PC-3 (cell line): ENCODE measurements at regions of chr1 and their contacts with region 1.

Region 1: GRCh38 chr1:32992489-32993323 is 28.1 kb upstream of the RNF19B start:
- DNase-seq: peak; percentile 93
- ATAC-seq: peak; percentile 94
- H3K4me3 ChIP-seq: no peak overlapping the region
- H3K27ac ChIP-seq: peak overlapping the region; percentile 61
- H3K4me1 ChIP-seq: peaks cover 48% of the 10 kb centered on the region
- H3K27me3 ChIP-seq: no peaks in the 10 kb centered on the region
- CTCF ChIP-seq: no peak

Region 2: DNA sequence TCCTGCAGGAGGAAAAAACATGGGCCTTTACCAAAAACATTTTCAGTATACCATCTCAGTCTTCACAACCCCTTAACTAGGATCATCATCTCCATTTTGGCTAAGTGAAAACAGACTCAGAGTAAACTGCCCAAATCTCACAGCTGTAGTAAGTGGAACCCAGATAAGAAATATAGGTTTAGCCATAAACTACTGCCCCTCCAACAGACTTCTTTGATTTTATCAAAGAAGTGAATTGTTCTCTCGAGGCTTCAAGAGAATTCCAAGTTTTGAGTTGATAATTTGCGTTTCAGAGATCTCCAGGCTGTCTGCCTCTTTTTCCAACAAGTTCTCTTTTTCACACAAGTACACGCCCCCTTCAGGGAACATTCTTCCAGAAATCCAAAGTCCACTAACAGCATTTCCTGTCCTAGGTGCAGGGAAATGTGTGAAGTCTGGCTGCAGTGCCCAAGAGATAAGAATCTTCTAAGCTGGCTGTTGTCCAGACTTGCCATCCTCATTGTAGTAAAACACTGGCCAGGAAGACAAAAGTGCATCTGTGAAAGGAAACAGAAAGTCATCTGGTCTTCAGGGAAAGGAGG is 58.9 kb before region 1 on chr1:
- CTCF ChIA-PET with region 1: no interaction called
- POLR2A ChIA-PET with region 1: interaction called, 13 read pairs
- intact Hi-C with region 1: loop called (anchors 5 kb)
- DNase-seq: peak; percentile 76
- ATAC-seq: peak; percentile 69
- H3K4me3 ChIP-seq: no peak overlapping the region
- H3K27ac ChIP-seq: peak overlapping the region; percentile 18; the same call in 1 of the 2 replicates
- H3K4me1 ChIP-seq: peaks cover 28% of the 10 kb centered on the region
- H3K27me3 ChIP-seq: no peaks in the 10 kb centered on the region
- CTCF ChIP-seq: no peak

Region 3: GRCh38 chr1:32939655-32940371 is 52.9 kb before region 1 on chr1:
- CTCF ChIA-PET with region 1: no interaction called
- POLR2A ChIA-PET with region 1: interaction called, 13 read pairs
- intact Hi-C with region 1: no loop called
- DNase-seq: peak; percentile 79
- ATAC-seq: peak; percentile 86
- H3K4me3 ChIP-seq: no peak overlapping the region
- H3K27ac ChIP-seq: peak overlapping the region; percentile 68
- H3K4me1 ChIP-seq: peaks cover 40% of the 10 kb centered on the region
- H3K27me3 ChIP-seq: no peaks in the 10 kb centered on the region
- CTCF ChIP-seq: no peak

Region 4: GRCh38 chr1:32953495-32953894 is 39.2 kb before region 1 on chr1:
- CTCF ChIA-PET with region 1: no interaction called
- POLR2A ChIA-PET with region 1: interaction called, 3 read pairs
- intact Hi-C with region 1: loop called (anchors 2 kb)
- DNase-seq: peak; percentile 91
- ATAC-seq: peak; percentile 86
- H3K4me3 ChIP-seq: peak overlapping the region; percentile 3; the same call in 1 of the 2 replicates
- H3K27ac ChIP-seq: peak overlapping the region; percentile 93
- H3K4me1 ChIP-seq: peaks cover 38% of the 10 kb centered on the region
- H3K27me3 ChIP-seq: no peaks in the 10 kb centered on the region
- CTCF ChIP-seq: no peak

Region 5: GRCh38 chr1:32964461-32965250 is 28.1 kb before region 1 on chr1 and contains the start of gene RNF19B:
- CTCF ChIA-PET with region 1: no interaction called
- POLR2A ChIA-PET with region 1: interaction called, 15 read pairs
- intact Hi-C with region 1: no loop called
- DNase-seq: peak; percentile 95
- ATAC-seq: peak; percentile 91
- H3K4me3 ChIP-seq: peak within 1 kb of the TSS; percentile 98
- H3K27ac ChIP-seq: peak within 1 kb of the TSS; percentile 46
- H3K4me1 ChIP-seq: peaks cover 32% of the 10 kb centered on the region
- H3K27me3 ChIP-seq: no peaks in the 10 kb centered on the region
- CTCF ChIP-seq: no peak
- total RNA-seq, gene RNF19B: 17.9 and 21.3 TPM in 2 replicates

Region 6: DNA sequence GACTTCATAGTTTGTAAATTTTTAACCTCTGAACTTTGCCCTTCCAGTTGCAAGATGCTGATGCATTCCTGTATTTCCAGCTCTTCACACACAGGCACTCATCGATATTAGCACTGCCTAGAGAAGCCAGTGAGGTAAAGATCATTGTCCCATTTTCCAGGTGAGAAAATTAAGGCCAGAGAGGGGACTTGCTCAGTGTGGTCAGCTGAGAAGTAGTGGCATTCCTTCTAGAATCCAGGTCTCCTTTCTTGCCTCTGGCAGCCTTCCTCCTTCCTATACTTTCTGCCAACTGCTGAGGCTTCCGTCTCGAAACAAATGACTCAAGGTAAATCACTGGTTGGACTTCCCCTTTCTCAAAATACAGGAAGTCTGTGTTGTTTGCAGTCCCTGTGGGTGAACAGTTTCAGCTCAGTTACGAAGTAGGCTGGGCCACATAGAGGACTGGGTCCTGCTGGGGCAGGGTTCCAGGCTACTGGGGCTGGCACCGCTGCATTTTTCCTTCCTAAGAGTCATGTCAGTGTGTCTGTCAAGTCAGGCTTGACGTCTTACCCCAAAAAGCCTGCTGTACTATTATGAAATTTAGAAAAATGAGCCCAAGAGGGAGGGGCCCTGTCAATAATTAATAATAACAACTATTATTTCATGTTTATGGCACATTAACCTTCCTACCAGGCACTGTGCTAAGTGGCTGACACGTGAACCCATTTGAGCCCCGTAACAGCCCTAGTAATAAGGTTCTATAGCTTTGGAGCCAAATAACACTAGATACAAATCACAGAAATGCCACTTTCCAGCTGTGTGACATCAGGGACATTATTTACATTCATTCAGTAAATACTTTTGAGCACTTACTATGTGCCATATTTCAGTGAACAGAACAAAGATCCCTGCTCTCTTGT is 11.5 kb before region 1 on chr1:
- CTCF ChIA-PET with region 1: no interaction called
- POLR2A ChIA-PET with region 1: interaction called, 3 read pairs
- intact Hi-C with region 1: loop called (anchors 1 kb)
- DNase-seq: peak; percentile 96
- ATAC-seq: peak; percentile 99
- H3K4me3 ChIP-seq: peak overlapping the region; percentile 20; the same call in 1 of the 2 replicates
- H3K27ac ChIP-seq: peak overlapping the region; percentile 93
- H3K4me1 ChIP-seq: peaks cover 17% of the 10 kb centered on the region
- H3K27me3 ChIP-seq: no peaks in the 10 kb centered on the region
- CTCF ChIP-seq: no peak

Region 7: DNA sequence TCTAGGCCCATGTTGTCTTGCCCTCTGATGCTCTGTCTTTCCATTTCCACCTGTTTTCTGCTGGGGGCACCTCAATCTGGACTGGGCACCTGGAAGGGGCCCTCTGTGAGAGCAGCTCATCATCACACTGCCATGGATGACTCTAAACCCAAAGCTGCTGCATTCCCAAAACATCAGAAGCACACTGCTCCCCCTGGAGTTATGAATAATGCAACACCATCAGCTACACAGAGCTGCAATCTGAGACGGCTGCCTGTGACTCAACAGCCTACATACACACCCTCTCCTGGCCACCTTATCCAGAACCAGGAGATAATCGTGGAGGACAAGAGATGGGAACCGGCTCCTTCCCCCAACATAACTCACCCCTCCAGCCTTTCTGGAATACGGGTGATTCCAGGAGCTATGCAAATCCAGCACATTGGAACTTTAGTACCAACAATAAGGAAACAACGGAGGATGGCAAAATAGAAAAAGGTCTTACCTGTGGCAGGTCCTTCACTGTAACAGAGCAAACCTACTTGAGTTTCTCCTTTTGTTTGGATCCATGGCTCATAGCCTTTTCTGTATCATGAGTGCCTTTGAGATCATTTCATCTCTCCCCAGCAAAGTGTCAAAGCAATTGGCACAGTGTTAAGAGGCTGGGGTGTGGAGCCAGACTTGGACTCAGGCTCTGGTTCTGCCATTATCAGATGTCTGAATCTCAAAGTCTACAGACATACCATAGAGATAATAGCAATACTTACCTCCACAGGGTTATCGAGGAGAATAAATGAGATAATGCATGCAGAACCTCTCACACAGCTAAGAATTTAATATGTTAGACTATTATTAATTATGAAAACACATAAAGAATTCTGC is 14.7 kb after region 1 on chr1:
- CTCF ChIA-PET with region 1: interaction called, 8 read pairs
- POLR2A ChIA-PET with region 1: interaction called, 5 read pairs
- intact Hi-C with region 1: loop called (anchors 2 kb)
- DNase-seq: peak; percentile 93
- ATAC-seq: peak; percentile 97
- H3K4me3 ChIP-seq: no peak overlapping the region
- H3K27ac ChIP-seq: peak overlapping the region; percentile 28
- H3K4me1 ChIP-seq: peaks cover 40% of the 10 kb centered on the region
- H3K27me3 ChIP-seq: no peaks in the 10 kb centered on the region
- CTCF ChIP-seq: peak; percentile 86